Mammary epithelial cell (primary cell): ENCODE measurements at regions of chr20 and their contacts with region 1.

Region 1: DNA sequence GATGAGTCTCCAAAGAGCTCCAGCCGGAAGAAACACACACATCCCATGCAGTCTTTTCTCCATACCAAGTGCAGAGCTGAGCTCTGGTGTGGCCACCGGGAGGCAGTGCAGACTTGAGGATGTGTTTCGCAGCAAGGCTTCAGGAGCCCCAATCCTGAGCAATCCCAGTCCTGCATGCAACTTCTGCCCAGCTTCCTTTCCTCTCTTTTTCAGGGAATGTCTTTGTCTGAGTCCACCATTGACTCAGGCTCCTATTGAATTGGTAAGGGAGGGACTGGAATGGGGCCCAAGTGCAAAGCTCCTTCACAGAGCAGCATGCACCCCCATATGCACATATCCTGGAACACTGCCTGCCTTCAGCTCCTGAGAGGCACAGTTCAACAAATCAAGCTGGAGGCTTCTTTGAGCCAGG is 50.5 kb upstream of the ASIP start:
- DNase-seq: peak; percentile 68
- H3K4me3 ChIP-seq: no peak overlapping the region
- H3K27ac ChIP-seq: no peak overlapping the region
- H3K4me1 ChIP-seq: no peaks in the 10 kb centered on the region
- H3K27me3 ChIP-seq: no peaks in the 10 kb centered on the region
- CTCF ChIP-seq: peak; percentile 84 to 89

Region 2: DNA sequence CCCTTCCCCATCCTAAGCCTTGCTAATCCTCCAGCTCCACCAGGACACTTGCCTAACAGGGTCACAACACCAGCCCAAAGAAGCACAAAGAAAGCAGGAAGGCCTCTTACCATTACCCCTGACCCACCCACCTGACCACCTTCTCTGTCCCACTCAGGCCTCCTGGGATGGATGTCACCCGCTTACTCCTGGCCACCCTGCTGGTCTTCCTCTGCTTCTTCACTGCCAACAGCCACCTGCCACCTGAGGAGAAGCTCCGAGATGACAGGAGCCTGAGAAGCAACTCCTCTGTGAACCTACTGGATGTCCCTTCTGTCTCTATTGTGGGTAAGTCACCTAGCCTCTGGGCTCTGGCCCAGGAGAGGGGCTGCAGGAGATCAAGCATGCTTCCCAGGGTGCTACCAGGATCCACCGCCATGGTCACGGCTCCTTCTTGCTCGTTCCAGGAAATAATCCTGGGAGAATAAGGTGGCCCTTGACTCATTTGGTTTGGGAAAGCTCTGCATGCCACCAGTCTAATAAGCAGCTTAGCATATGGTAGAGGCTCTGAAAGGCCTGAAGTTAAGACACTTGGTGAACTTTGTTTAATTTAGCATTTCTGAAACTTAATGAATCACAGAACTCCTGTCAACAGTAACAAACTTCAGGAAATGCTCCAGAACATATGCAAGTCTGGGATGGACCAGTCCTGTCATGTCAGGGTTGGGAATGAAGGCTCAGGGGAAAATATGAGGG is 69.7 kb after region 1 on chr20:
- CTCF ChIA-PET with region 1: no interaction called
- dilution Hi-C with region 1: no loop called
- in situ Hi-C with region 1: no loop called
- intact Hi-C with region 1: loop called (anchors 2 kb)
- DNase-seq: no peak
- H3K4me3 ChIP-seq: no peak overlapping the region
- H3K27ac ChIP-seq: no peak overlapping the region
- H3K4me1 ChIP-seq: no peaks in the 10 kb centered on the region
- H3K27me3 ChIP-seq: no peaks in the 10 kb centered on the region
- CTCF ChIP-seq: no peak

Region 3: DNA sequence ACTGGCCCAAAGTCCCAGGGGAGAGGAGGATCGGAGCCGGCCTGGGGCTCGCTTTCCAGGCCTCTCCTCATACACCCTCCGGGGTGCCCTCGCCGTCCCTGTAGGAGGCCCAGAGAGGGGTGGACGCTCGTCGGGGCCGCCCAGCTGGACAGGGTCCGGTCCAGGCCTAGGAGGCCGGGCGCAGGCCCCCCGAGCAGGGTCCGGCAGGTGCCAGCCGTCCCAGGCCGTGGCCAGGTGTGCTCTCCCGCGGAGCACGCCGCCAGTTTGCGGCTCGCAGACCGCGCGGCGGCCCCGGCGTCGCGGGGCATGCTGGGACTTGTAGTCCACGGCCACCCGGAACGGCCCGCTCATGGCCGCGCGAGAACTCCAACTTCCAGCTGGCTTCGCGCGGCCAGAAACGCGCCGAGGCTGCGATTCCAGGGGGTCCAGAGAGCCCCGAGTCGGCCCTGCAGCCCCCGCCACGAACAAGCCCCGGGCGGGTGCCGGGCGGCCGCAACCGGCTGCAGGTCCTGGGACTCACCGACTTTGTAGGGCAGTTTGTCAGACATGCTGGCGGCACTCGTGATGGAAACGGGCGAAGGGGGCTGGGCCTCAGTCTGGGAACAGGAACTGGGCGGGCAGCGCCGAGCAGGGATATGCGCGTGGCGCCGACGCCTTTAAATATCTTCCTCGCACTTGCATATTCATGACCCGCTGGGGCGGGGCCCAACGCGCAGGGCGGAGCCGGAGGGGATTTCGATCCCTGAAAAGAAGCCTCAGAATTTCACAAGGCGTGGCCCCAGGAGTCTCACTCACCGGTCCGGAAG is 112.2 kb after region 1 on chr20 and contains the start of gene AHCY:
- CTCF ChIA-PET with region 1: no interaction called
- dilution Hi-C with region 1: no loop called
- in situ Hi-C with region 1: no loop called
- intact Hi-C with region 1: loop called (anchors 5 kb)
- DNase-seq: peak; percentile 98
- H3K4me3 ChIP-seq: peak within 1 kb of the TSS; percentile 68 to 95 (median 90)
- H3K27ac ChIP-seq: peak within 1 kb of the TSS; percentile 83
- H3K4me1 ChIP-seq: peaks cover 30% of the 10 kb centered on the region
- H3K27me3 ChIP-seq: no peaks in the 10 kb centered on the region
- CTCF ChIP-seq: no peak
- total RNA-seq, gene AHCY: 258 to 274 TPM

Region 4: GRCh38 chr20:34522969-34523871 is 332.5 kb after region 1 on chr20:
- CTCF ChIA-PET with region 1: no interaction called
- dilution Hi-C with region 1: no loop called
- in situ Hi-C with region 1: no loop called
- intact Hi-C with region 1: loop called (anchors 10 kb)
- DNase-seq: peak; percentile 17
- H3K4me3 ChIP-seq: no peak overlapping the region
- H3K27ac ChIP-seq: no peak overlapping the region
- H3K4me1 ChIP-seq: peaks cover 21% of the 10 kb centered on the region
- H3K27me3 ChIP-seq: no peaks in the 10 kb centered on the region
- CTCF ChIP-seq: peak; percentile 45 to 57

Region 5: DNA sequence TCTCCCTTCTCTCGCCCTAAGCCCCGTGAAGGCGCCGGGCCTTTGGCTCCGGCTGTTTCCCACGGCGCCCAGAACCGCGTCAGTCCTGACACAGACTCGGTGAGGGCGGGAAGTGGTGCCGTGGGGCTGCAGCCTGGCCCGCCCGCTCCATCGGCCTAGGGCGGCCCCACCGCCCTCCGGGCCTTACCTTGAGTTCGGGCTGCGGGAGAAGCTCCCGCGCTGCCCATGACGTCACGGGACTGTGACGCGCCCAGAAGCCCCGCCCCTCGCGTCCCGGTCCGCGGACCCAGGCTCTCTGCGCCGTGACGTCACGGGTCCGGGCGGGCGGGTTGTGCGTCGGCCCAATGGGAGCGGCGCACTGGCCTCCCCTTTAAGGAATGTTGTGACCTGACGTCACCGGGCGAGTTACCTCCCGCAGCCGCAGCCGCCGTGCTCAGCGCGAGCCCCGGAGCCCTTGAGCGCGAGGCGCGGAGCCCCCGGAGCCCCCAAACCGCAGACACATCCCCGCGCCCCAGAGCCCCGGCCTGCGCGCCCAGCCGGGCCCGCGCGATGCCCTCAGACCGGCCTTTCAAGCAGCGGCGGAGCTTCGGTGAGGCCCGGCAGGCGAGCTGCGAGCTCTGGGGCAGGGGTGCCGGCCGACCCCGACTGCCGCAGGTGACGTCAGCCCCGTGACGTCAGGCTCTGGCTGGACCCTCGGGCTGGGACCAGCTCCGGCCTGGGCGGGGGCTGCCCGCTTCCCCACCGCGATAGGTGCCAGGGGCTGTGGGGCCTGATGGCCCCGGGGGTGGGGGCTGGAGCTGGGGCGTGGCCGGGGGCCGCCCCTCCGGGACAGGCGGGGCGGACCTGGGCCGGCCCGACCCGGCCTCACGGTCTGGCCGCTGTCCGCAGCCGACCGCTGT is 367.9 kb after region 1 on chr20 and contains the start of gene MAP1LC3A:
- CTCF ChIA-PET with region 1: no interaction called
- dilution Hi-C with region 1: no loop called
- in situ Hi-C with region 1: no loop called
- intact Hi-C with region 1: loop called (anchors 10 kb)
- DNase-seq: peak; percentile 79
- H3K4me3 ChIP-seq: peak within 1 kb of the TSS; percentile 55 to 73 (median 60)
- H3K27ac ChIP-seq: peak within 1 kb of the TSS; percentile 39
- H3K4me1 ChIP-seq: peaks cover 7% of the 10 kb centered on the region
- H3K27me3 ChIP-seq: no peaks in the 10 kb centered on the region
- CTCF ChIP-seq: no peak
- total RNA-seq, gene MAP1LC3A: 9.4 to 18.5 TPM

Region 6: GRCh38 chr20:34704177-34705007 is 513.7 kb after region 1 on chr20 and contains the start of gene TP53INP2:
- CTCF ChIA-PET with region 1: no interaction called
- dilution Hi-C with region 1: no loop called
- in situ Hi-C with region 1: no loop called
- intact Hi-C with region 1: loop called (anchors 5 kb)
- DNase-seq: peak; percentile 69
- H3K4me3 ChIP-seq: peak within 1 kb of the TSS; percentile 49 to 78 (median 61)
- H3K27ac ChIP-seq: peak within 1 kb of the TSS; percentile 52
- H3K4me1 ChIP-seq: peaks cover 35% of the 10 kb centered on the region
- H3K27me3 ChIP-seq: no peaks in the 10 kb centered on the region
- CTCF ChIP-seq: no peak
- total RNA-seq, gene TP53INP2: 2.5 to 4.4 TPM

Region 7: GRCh38 chr20:34768096-34768495 is 577.4 kb after region 1 on chr20:
- CTCF ChIA-PET with region 1: interaction called, 10 read pairs
- dilution Hi-C with region 1: no loop called
- in situ Hi-C with region 1: no loop called
- intact Hi-C with region 1: no loop called
- DNase-seq: no peak
- H3K4me3 ChIP-seq: no peak overlapping the region
- H3K27ac ChIP-seq: no peak overlapping the region
- H3K4me1 ChIP-seq: no peaks in the 10 kb centered on the region
- H3K27me3 ChIP-seq: no peaks in the 10 kb centered on the region
- CTCF ChIP-seq: no peak